OCI-LY7 (cell line): ENCODE measurements at regions of chr6 and their contacts with region 1.

Region 1: GRCh38 chr6:32153564-32154513 is at the start of gene PPT2:
- DNase-seq: peak; percentile 93
- H3K4me3 ChIP-seq: peak within 1 kb of the TSS; percentile 80
- H3K27ac ChIP-seq: peak within 1 kb of the TSS; percentile 62
- H3K4me1 ChIP-seq: peaks cover 23% of the 10 kb centered on the region
- CTCF ChIP-seq: 0 out of 2 replicates have a peak, but pooled peaks have one; percentile 19
- total RNA-seq, gene PPT2: 111 and 130 TPM in 2 replicates

Region 2: DNA sequence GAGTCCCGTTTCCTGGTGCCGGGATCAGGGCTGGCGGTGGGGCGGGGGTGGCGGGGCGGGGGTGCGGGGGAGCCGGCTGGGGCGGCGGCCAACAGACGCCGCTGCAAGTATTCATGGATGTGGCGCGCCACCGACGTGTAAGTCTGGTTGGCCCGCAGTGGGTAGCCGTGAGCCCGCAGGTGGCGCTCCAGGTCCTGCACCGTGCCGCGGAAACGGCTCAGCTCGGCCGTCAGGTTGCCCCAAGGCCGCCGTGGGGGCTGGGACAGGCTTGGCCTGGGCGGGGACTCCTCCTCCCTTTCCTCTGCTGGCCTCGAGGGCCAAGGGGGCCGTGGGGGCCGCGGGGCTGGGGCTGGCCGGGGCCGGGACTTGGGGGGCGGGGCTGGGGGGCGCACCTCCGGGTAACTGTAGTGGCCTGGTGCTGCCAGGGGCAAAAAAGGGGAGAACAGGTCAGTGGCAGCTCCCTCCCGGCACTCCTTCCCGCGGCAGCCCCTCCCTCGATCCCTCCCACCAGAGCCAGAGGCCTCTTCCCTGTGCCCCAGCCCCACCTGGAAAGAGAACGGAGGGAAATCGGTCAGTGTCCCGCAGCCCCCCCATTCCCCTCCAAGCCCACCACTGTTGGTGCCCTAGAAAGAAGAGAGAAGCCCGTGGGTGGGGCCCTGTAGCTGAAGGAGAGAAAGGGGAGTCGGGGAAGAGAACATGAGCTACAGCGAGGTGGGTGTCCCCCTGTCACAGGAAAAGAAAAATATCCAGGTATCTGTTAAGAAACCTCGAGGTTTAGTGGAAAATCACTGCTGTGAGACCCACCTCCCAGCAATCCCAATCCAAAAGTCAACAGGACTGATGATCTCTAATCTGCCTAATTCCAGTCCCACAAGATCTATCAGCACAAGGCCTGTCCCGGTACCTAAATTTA is 66.0 kb before region 1 on chr6:
- CTCF ChIA-PET with region 1: no interaction called
- POLR2A ChIA-PET with region 1: no interaction called
- intact Hi-C with region 1: loop called (anchors 2 kb)
- DNase-seq: peak; percentile 82
- H3K4me3 ChIP-seq: no peak overlapping the region
- H3K27ac ChIP-seq: no peak overlapping the region
- H3K4me1 ChIP-seq: no peaks in the 10 kb centered on the region
- CTCF ChIP-seq: peak; percentile 57; the same call in 1 of the 2 replicates

Region 3: GRCh38 chr6:32118782-32119628 is 34.8 kb before region 1 on chr6:
- CTCF ChIA-PET with region 1: no interaction called
- POLR2A ChIA-PET with region 1: no interaction called
- intact Hi-C with region 1: loop called (anchors 1 kb)
- DNase-seq: peak; percentile 82
- H3K4me3 ChIP-seq: no peak overlapping the region
- H3K27ac ChIP-seq: no peak overlapping the region
- H3K4me1 ChIP-seq: peaks cover 5% of the 10 kb centered on the region
- CTCF ChIP-seq: peak; percentile 90

Region 4: GRCh38 chr6:32129297-32130088 is 24.3 kb before region 1 on chr6:
- CTCF ChIA-PET with region 1: interaction called, 7 read pairs
- POLR2A ChIA-PET with region 1: no interaction called
- intact Hi-C with region 1: loop called (anchors 1 kb)
- DNase-seq: no peak
- H3K4me3 ChIP-seq: peak overlapping the region; percentile 79
- H3K27ac ChIP-seq: peak overlapping the region; percentile 27
- H3K4me1 ChIP-seq: peaks cover 29% of the 10 kb centered on the region
- CTCF ChIP-seq: no peak

Region 5: GRCh38 chr6:32140420-32141046 is 13.3 kb before region 1 on chr6:
- CTCF ChIA-PET with region 1: no interaction called
- POLR2A ChIA-PET with region 1: no interaction called
- intact Hi-C with region 1: no loop called
- DNase-seq: no peak
- H3K4me3 ChIP-seq: no peak overlapping the region
- H3K27ac ChIP-seq: no peak overlapping the region
- H3K4me1 ChIP-seq: no peaks in the 10 kb centered on the region
- CTCF ChIP-seq: no peak

Region 6: DNA sequence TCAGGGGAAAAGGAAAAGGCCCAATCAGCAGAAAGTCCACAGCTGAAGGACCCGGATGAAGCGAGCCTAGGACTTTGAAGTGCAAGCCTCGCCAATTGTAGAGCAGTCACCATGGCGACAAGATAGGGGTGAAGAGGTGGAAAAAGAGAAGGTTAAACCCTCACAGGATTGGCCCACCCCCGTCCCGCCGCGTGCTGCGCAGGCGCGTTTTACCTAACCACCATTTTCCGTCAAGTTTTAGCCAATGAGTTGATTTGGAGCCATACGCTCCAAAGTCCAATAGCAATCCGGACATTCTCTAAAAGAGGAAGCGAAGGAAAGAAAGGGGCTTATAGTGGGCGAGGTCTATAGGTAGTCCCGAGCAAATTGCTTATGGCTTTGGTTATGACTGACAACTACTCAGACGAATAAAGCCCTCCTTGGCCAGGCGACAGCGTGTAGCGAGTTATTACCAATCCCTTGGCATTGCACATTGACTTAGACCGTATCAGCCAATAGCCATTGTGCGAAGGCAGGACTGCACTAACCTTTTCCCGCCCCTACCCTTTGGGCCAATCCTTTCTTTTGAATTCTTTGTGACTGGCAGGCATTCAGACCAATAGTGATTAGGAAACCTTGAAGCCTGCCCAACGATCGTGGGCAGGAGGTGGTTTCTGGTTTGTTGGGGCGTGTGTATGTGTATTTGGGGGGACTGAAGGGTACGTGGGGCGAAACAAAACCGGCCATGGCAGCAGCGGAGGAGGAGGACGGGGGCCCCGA is 24.1 kb after region 1 on chr6 and contains the start of gene RNF5:
- CTCF ChIA-PET with region 1: no interaction called
- POLR2A ChIA-PET with region 1: interaction called, 4 read pairs
- intact Hi-C with region 1: loop called (anchors 2 kb)
- DNase-seq: peak; percentile 100
- H3K4me3 ChIP-seq: peak within 1 kb of the TSS; percentile 74
- H3K27ac ChIP-seq: peak within 1 kb of the TSS; percentile 56
- H3K4me1 ChIP-seq: peaks cover 41% of the 10 kb centered on the region
- CTCF ChIP-seq: no peak
- total RNA-seq, gene RNF5: 51.3 and 59.9 TPM in 2 replicates

Region 7: GRCh38 chr6:32224696-32225095 is 70.9 kb after region 1 on chr6:
- CTCF ChIA-PET with region 1: no interaction called
- POLR2A ChIA-PET with region 1: no interaction called
- intact Hi-C with region 1: loop called (anchors 2 kb)
- DNase-seq: peak; percentile 81
- H3K4me3 ChIP-seq: peak overlapping the region; percentile 10
- H3K27ac ChIP-seq: peak overlapping the region; percentile 63
- H3K4me1 ChIP-seq: peaks cover 56% of the 10 kb centered on the region
- CTCF ChIP-seq: 0 out of 2 replicates have a peak, but pooled peaks have one; percentile 14